ENCODE measurements at regions of chr12 and their contacts with region 1.

Region 1: GRCh38 chr12:52980693-52981423 is 25.4 kb upstream of the EIF4B start:
- DNase-seq: peak; percentile 94
- ATAC-seq: peak; percentile 83
- H3K4me3 ChIP-seq: peak overlapping the region in 2 of 3 experiments; percentile 6 to 60; a peak in 3 of 6 replicates
- H3K27ac ChIP-seq: peak overlapping the region; percentile 52
- H3K4me1 ChIP-seq: peaks cover 34% of the 10 kb centered on the region
- H3K27me3 ChIP-seq: no peaks in the 10 kb centered on the region
- CTCF ChIP-seq: peak; percentile 100
- EP300 ChIP-seq: 0 out of 4 replicates have a peak, but pooled peaks of 1 of the 2 experiments have one; percentile 28
- POLR2A ChIP-seq: no peak
- RAD21 ChIP-seq: peak; percentile 100

Region 2: GRCh38 chr12:52139552-52140062 is 841.3 kb before region 1 on chr12:
- CTCF ChIA-PET with region 1: no interaction called
- POLR2A ChIA-PET with region 1: no interaction called
- in situ Hi-C with region 1: loop called (anchors 25 kb)
- intact Hi-C with region 1: no loop called
- DNase-seq: no peak
- ATAC-seq: peak; percentile 89
- H3K4me3 ChIP-seq: no peak overlapping the region
- H3K27ac ChIP-seq: no peak overlapping the region
- H3K4me1 ChIP-seq: no peaks in the 10 kb centered on the region
- H3K27me3 ChIP-seq: peaks cover 2 to 32% of the 10 kb centered on the region in 2 experiments; a peak in 3 of 5 replicates
- CTCF ChIP-seq: peak; percentile 80
- EP300 ChIP-seq: no peak
- POLR2A ChIP-seq: no peak
- RAD21 ChIP-seq: peak; percentile 27; the same call in 1 of the 2 replicates

Region 3: DNA sequence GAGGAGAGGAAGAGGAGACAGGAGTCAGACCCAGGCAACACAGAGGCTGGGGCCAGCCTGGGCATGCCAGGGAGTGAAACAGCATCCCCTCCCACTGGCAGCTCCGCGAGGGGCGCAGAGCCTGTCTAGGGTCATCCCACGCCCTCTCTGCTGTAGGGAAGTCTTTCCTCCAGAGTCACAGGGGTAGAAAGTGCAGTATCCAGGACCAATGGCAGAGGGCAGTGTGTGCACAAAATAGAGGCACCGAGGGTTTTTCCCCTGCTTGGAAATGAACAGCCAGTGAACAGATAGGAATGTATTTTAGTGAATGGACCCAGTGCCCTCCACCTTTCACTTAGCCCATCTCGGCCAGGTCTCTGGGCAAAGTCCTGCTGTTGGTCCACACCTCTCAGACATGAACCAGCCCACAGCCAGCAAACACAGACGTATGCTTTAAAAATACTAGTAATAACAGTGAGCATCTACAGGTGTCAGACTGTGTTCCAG is 397.8 kb before region 1 on chr12:
- CTCF ChIA-PET with region 1: interaction called, 15 read pairs
- POLR2A ChIA-PET with region 1: no interaction called
- in situ Hi-C with region 1: loop called (anchors 10 kb)
- intact Hi-C with region 1: no loop called
- DNase-seq: peak; percentile 40
- ATAC-seq: peak; percentile 94
- H3K4me3 ChIP-seq: no peak overlapping the region
- H3K27ac ChIP-seq: no peak overlapping the region
- H3K4me1 ChIP-seq: no peaks in the 10 kb centered on the region
- H3K27me3 ChIP-seq: peaks cover 4 to 49% of the 10 kb centered on the region in 2 experiments; a peak in 2 of 5 replicates
- CTCF ChIP-seq: peak; percentile 82
- EP300 ChIP-seq: no peak
- POLR2A ChIP-seq: no peak
- RAD21 ChIP-seq: peak; percentile 71

Region 4: GRCh38 chr12:52879394-52880351 is 101.2 kb before region 1 on chr12:
- CTCF ChIA-PET with region 1: interaction called, 212 read pairs
- POLR2A ChIA-PET with region 1: interaction called, 32 read pairs
- in situ Hi-C with region 1: no loop called
- intact Hi-C with region 1: loop called (anchors 1 kb)
- DNase-seq: peak; percentile 83
- ATAC-seq: peak; percentile 90
- H3K4me3 ChIP-seq: peak overlapping the region; percentile 49 to 71 (median 51)
- H3K27ac ChIP-seq: no peak overlapping the region
- H3K4me1 ChIP-seq: peaks cover 56% of the 10 kb centered on the region
- H3K27me3 ChIP-seq: peaks cover 1 to 8% of the 10 kb centered on the region in 2 experiments; a peak in 2 of 5 replicates
- CTCF ChIP-seq: peak; percentile 92
- EP300 ChIP-seq: no peak
- POLR2A ChIP-seq: no peak
- RAD21 ChIP-seq: peak; percentile 77

Region 5: DNA sequence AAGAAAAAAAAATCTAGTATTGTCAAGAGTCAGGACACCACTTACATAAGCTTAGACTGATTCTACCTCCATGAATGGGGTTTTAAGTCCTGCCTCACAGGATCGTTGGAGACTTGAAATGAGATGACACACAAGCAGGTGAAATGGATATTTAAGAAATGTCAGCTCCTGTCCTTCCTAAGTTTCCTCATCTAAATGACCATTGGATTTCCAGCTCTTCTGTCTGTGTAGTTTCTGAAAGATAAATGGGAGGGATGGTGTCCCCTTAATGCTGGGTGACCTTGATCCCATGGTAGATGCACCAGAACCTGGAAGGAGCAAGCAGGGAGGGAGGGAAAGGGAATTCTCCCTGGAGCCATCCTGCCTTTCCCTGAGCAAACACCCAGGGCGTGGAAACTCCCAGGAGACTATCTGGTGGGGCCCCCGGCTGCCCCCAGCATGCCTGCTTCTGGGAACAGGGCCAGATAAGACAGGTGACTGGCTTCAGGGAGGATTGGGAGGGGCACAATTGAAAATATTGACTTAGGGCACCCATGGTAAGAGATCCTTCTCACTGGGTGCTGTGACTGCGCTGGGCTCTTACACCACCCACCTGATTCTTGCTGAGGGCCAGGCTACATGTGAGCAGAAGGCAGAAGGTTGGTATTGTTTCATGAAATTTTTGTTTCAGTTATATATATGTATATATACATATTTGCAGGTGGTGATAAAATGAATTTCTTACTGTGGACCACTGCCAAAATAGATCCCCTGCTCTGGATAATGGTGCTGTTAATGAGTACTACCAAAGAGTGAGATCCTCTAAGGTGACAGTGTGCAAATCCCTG is 85.6 kb before region 1 on chr12:
- CTCF ChIA-PET with region 1: interaction called, 3 read pairs
- POLR2A ChIA-PET with region 1: interaction called, 17 read pairs
- in situ Hi-C with region 1: no loop called
- intact Hi-C with region 1: no loop called
- DNase-seq: peak; percentile 92
- ATAC-seq: peak; percentile 71
- H3K4me3 ChIP-seq: no peak overlapping the region
- H3K27ac ChIP-seq: peak overlapping the region; percentile 36
- H3K4me1 ChIP-seq: peaks cover 46% of the 10 kb centered on the region
- H3K27me3 ChIP-seq: no peaks in the 10 kb centered on the region
- CTCF ChIP-seq: no peak
- EP300 ChIP-seq: peak in 1 of 2 experiments; percentile 80; a peak in 2 of 4 replicates
- POLR2A ChIP-seq: no peak; a peak in 2 of 4 replicates
- RAD21 ChIP-seq: no peak

Region 6: GRCh38 chr12:52924764-52925716 is 55.8 kb before region 1 on chr12:
- CTCF ChIA-PET with region 1: interaction called, 8 read pairs
- POLR2A ChIA-PET with region 1: interaction called, 7 read pairs
- in situ Hi-C with region 1: no loop called
- intact Hi-C with region 1: loop called (anchors 1 kb)
- DNase-seq: peak; percentile 76
- ATAC-seq: peak; percentile 38
- H3K4me3 ChIP-seq: peak overlapping the region; percentile 38 to 60 (median 43); a peak in 5 of 6 replicates
- H3K27ac ChIP-seq: peak overlapping the region; percentile 99
- H3K4me1 ChIP-seq: peaks cover 84% of the 10 kb centered on the region
- H3K27me3 ChIP-seq: no peaks in the 10 kb centered on the region
- CTCF ChIP-seq: no peak
- EP300 ChIP-seq: no peak; a peak in 1 of 4 replicates
- POLR2A ChIP-seq: no peak
- RAD21 ChIP-seq: no peak

Region 7: DNA sequence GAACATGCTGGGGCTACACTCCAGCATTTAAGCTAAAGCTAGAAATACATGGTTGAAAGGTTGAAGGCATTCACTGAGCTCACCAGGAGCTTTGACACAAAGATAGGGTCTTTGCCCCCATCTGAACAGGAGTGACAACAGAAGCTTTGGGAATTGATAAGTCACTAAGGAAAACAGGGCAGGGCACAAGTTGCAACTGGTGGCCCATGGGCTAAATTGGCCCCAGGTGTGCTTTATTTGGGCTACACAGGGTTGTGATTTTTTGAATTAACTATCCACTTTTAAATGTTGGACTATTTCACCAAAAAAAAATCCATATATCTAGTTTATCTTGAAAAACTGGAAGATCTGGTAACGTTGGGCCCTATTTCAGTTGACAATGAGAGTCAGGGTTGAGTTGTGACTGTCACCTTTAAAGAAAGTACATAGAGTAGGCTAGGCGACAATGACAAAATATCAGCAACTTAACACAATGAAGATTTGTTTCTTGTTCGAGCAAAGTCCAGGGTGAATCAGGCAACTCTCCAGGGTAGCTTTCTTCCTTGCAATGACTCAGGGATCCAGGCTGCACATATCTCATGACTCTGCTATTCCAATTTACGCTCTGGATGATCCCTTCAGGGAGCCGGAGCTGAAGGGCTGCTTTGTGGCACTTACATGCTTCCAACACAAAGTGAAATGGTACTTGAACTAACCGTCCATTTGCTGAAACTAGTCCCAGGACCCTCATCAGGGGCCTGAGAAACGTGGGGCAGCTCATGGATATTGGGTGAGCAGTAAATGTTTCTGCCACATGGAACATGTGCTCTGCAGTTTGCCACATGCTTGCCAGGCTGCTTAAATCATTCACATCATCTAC is 12.1 kb after region 1 on chr12:
- CTCF ChIA-PET with region 1: interaction called, 6 read pairs
- POLR2A ChIA-PET with region 1: interaction called, 10 read pairs
- in situ Hi-C with region 1: no loop called
- intact Hi-C with region 1: no loop called
- DNase-seq: peak; percentile 99
- ATAC-seq: peak; percentile 88
- H3K4me3 ChIP-seq: peak overlapping the region; percentile 13 to 55 (median 18); a peak in 5 of 6 replicates
- H3K27ac ChIP-seq: peak overlapping the region; percentile 99
- H3K4me1 ChIP-seq: peaks cover 61% of the 10 kb centered on the region
- H3K27me3 ChIP-seq: no peaks in the 10 kb centered on the region
- CTCF ChIP-seq: no peak; the same call in 1 of the 2 replicates
- EP300 ChIP-seq: peak; percentile 65 to 87; a peak in 3 of 4 replicates
- POLR2A ChIP-seq: peak; percentile 17 to 66; a peak in 3 of 4 replicates
- RAD21 ChIP-seq: peak; percentile 42; the same call in 1 of the 2 replicates

Measured in HepG2 (cell line).